K562 (cell line): ENCODE measurements at regions of chr6 and their contacts with region 1.

Region 1: DNA sequence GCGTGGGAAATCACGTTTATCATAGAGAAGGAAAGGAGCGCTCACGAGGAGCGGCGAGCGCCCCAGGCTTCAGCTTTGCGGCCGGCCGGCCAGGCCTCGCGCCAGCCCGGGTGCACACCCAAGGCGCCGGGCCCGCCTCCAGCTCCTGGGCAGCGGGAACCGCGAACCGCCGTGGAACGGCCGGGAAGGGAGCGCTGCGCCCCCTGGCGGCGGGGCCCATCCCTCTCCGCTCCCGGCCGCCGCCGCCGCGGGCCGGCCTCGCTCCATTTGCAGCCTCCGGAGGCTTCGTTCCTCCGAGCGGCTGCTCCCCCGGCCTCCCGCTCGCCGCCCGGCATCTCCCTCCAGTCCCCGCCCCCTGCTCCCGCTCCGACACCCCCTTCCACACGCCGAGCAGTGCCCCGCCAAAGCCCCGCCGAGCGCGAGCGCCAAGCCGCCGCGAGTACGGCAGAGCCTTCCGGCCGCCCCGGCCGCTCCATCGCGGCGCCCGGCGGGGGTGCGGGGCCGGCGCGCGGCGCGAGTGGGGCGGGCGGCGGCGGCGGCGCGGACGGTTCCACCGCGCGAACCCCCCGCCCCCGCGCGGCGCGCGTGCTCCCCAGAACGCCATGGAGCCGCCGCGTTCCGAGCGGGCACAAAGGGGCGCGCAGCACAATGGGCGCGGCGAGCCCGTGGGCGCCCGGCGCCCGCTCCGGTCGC is 956 bp downstream of the BEND3 start:
- DNase-seq: peak; percentile 85 to 91 (median 88)
- ATAC-seq: peak; percentile 83
- H3K4me3 ChIP-seq: peak overlapping the region; percentile 58
- H3K27ac ChIP-seq: peak overlapping the region; percentile 85
- H3K4me1 ChIP-seq: peaks cover 18 to 32% of the 10 kb centered on the region in 2 experiments
- H3K27me3 ChIP-seq: no peaks in the 10 kb centered on the region
- CTCF ChIP-seq: peak; percentile 62 to 82 (median 78)
- EP300 ChIP-seq: 0 out of 2 replicates have a peak, but pooled peaks have one; percentile 36
- POLR2A ChIP-seq: peak; percentile 65
- RAD21 ChIP-seq: peak; percentile 71 to 79

Region 2: DNA sequence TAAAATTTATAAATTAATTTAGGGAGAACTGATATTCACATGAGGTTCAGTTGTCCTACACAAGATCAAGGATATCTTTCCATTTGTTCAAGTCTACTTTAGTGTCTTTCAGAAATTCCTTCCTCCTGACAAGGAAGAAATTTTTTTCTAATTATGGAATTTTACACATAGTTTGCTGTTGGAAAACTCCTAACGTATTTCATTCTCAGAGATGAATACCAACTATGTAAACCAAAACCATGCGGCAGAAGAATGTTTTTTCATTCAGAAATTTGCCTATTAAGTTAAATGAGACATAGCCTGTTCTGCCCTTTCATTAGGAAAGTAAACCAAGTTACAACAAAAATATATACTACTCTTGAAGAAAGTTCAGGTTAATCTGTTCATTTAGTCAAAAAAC is 1139.4 kb before region 1 on chr6:
- CTCF ChIA-PET with region 1: no interaction called
- POLR2A ChIA-PET with region 1: no interaction called
- in situ Hi-C with region 1: no loop called
- intact Hi-C with region 1: no loop called
- DNase-seq: no peak
- ATAC-seq: no peak
- H3K4me3 ChIP-seq: no peak overlapping the region
- H3K27ac ChIP-seq: no peak overlapping the region
- H3K4me1 ChIP-seq: no peaks in the 10 kb centered on the region
- H3K27me3 ChIP-seq: peaks cover 2 to 3% of the 10 kb centered on the region in 2 experiments; a peak in 1 of 5 replicates
- CTCF ChIP-seq: no peak
- EP300 ChIP-seq: no peak
- POLR2A ChIP-seq: no peak
- RAD21 ChIP-seq: no peak

Region 3: DNA sequence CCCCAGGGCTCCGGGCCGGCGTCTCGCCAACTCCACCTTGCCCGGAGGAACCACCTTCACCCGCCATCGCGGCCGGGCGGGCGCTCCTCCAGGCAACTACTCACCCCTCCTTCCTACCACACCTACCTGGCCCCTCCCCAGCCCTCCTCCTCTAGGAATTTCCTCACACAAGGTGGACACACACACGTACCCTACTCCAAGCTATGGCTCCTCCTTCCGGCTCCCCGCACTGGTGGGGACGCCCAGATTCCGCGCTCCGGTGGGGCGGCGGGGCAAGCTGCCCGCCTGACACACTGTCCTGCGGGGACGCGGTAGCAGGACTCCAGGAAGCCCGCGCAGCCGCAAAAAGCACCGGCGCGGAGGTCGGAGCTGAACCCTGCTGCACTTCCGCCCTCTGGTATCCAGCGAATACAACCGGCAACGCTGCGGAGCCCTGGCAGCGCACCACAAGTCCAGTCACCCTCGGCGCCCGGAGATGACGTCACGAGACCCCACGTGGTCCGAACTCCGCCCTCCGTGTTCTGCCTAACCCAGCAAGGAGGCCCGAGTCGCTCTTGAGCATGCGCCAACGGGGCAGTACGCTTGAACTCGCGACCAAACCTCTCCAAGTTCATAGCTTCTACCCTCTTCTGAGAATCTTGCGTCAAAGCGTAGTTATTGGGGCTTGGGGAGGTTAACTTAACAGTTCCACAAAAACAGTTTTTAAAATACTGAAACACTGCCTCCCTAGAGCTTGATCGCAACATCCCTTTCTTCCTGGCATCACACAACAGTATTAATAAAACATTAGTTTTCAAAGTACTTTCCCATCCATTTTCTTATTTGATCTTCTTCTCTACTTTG is 788.8 kb before region 1 on chr6 and contains the start of gene ATG5:
- CTCF ChIA-PET with region 1: no interaction called
- POLR2A ChIA-PET with region 1: no interaction called
- in situ Hi-C with region 1: no loop called
- intact Hi-C with region 1: loop called (anchors 10 kb)
- DNase-seq: peak; percentile 97 to 99 (median 98)
- ATAC-seq: peak; percentile 98
- H3K4me3 ChIP-seq: peak within 1 kb of the TSS; percentile 86
- H3K27ac ChIP-seq: peak within 1 kb of the TSS; percentile 93
- H3K4me1 ChIP-seq: peaks cover 7 to 15% of the 10 kb centered on the region in 2 experiments; a peak in 4 of 5 replicates
- H3K27me3 ChIP-seq: no peaks in the 10 kb centered on the region
- CTCF ChIP-seq: 0 out of 6 replicates have a peak, but pooled peaks of 1 of the 3 experiments have one; percentile 6
- EP300 ChIP-seq: peak; percentile 21
- POLR2A ChIP-seq: peak; percentile 94
- RAD21 ChIP-seq: no peak
- polyA plus RNA-seq, gene ATG5: 29.0 to 29.6 TPM

Region 4: DNA sequence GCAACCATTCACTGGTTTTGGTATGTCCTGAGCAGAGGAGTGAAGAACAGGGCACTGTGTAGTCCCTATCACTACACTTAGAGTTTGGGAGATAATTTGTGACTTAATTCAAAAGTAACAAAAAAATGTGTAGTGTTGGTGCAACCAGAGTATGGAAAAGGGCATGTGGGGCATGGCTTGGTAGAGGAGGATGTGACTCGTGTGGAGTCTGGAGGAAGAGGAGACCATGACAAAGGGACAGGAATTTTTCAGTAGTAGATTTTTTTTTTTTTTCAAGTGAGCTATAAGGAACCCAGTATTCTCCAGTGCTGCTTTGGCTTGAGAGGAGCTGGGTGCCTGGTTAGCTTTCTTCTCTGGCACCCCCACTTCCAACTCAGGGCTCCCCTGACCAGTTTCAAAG is 81.2 kb before region 1 on chr6:
- CTCF ChIA-PET with region 1: interaction called, 4 read pairs
- POLR2A ChIA-PET with region 1: no interaction called
- in situ Hi-C with region 1: no loop called
- intact Hi-C with region 1: loop called (anchors 1 kb)
- DNase-seq: peak in 1 of 4 experiments; percentile 2
- ATAC-seq: no peak
- H3K4me3 ChIP-seq: no peak overlapping the region
- H3K27ac ChIP-seq: no peak overlapping the region
- H3K4me1 ChIP-seq: peaks cover 0 to 10% of the 10 kb centered on the region in 2 experiments; a peak in 1 of 5 replicates
- H3K27me3 ChIP-seq: no peaks in the 10 kb centered on the region
- CTCF ChIP-seq: no peak
- EP300 ChIP-seq: no peak
- POLR2A ChIP-seq: no peak
- RAD21 ChIP-seq: no peak

Region 5: DNA sequence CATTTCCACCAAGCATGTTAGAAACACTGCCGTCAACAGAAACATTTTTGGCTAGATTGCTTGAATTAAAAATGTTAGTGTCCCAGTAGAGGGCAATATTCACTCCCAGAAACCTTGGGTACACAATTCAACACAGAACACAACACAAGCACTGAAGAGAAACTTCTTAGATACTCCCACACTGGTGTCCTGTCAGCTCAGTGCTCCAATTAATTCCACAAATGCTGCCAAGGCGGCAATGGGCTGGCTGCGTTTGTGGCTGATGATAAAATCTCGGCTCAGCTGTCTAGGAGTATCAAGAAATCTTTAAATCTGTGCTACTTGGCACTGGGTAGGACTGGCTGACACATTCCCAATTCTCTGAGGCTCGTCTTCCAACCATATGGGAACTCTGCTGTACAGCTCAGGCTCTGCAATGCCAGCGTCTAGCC is 38.4 kb before region 1 on chr6:
- CTCF ChIA-PET with region 1: no interaction called
- POLR2A ChIA-PET with region 1: interaction called, 4 read pairs
- in situ Hi-C with region 1: no loop called
- intact Hi-C with region 1: loop called (anchors 5 kb)
- DNase-seq: no peak
- ATAC-seq: no peak
- H3K4me3 ChIP-seq: no peak overlapping the region
- H3K27ac ChIP-seq: no peak overlapping the region
- H3K4me1 ChIP-seq: peaks cover 0 to 3% of the 10 kb centered on the region in 2 experiments; a peak in 2 of 5 replicates
- H3K27me3 ChIP-seq: no peaks in the 10 kb centered on the region
- CTCF ChIP-seq: peak in 2 of 3 experiments; percentile 24 to 45; a peak in 2 of 6 replicates
- EP300 ChIP-seq: no peak
- POLR2A ChIP-seq: no peak
- RAD21 ChIP-seq: peak in 1 of 2 experiments; percentile 43; a peak in 2 of 4 replicates

Region 6: DNA sequence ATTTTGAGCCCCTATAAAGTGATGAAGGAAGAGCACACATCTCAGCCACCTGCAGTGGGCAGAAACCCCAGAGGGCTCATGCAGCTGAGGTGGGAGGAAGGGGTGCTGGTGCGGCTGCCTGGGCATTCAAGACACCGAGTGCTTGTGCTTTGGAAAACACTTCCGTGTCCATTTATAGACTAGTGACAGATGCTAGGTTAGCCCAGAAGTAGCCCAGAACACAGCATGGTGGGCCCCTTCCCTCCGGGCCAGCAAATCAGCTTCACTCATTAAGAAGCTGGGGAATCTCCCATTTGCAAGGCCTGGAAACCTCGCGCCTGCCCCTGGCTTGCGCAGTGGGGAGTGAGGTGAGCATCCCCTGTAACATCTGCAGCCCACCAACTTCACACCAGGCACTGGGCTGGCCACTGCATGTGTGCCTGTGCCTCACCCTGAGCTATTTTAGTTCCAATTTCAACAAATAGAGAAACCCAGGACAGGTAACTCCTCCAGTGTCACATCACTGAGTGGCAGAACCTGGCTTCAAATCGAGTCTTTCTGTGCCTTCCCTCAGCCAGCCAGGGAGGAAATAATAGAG is 11.9 kb before region 1 on chr6:
- CTCF ChIA-PET with region 1: no interaction called
- POLR2A ChIA-PET with region 1: interaction called, 11 read pairs
- in situ Hi-C with region 1: no loop called
- intact Hi-C with region 1: no loop called
- DNase-seq: no peak
- ATAC-seq: no peak
- H3K4me3 ChIP-seq: no peak overlapping the region
- H3K27ac ChIP-seq: no peak overlapping the region
- H3K4me1 ChIP-seq: peaks cover 4 to 5% of the 10 kb centered on the region in 2 experiments; a peak in 2 of 5 replicates
- H3K27me3 ChIP-seq: no peaks in the 10 kb centered on the region
- CTCF ChIP-seq: no peak
- EP300 ChIP-seq: no peak
- POLR2A ChIP-seq: no peak
- RAD21 ChIP-seq: no peak